Activated CD4-positive, alpha-beta T cell treated with anti-CD3 and anti-CD28 coated beads for 36 hours (primary cell): ENCODE measurements at regions of chr19 and their contacts with region 1.

Region 1: DNA sequence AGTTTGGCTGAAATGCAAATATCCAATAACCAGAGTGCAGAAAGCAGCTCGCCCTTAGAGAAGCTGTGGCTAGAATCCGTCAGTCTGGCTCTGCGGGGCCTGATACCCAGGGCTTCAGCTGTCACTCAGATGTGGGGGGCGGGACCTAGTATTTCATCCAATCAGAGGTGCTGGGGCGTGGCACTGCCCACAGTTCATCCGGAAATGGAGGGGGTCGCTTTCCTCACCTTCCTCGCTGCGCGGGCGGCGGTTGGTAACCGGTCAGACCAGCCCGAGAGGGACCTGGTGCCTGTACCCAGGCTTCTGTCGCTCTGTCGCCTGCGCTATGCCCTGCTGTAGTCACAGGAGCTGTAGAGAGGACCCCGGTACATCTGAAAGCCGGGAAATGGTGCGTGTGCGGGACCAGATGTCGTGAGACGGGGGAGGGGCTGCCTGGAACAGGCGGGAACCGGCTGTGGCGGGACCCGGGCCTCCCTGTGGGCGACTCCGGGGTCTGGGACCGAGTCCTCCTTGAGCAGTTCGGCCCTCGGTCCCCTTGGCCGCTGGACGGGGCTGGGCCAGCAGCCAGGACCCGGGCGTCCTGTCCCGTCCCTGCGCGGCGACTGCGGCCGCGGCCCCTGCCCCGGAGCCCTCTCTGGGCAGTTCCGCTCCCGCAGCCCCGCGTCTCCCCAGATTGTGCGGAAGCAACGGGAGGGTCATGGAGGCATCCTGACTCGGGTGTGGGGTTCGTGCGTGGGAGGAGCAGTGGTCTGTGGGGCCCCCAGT is at the start of gene ZNF700:
- DNase-seq: peak; percentile 97
- ATAC-seq: peak; percentile 92
- H3K4me3 Mint-ChIP-seq: peak within 1 kb of the TSS; percentile 81
- H3K27ac Mint-ChIP-seq: peak within 1 kb of the TSS; percentile 99
- H3K4me1 Mint-ChIP-seq: peaks cover 40% of the 10 kb centered on the region
- H3K27me3 Mint-ChIP-seq: no peaks in the 10 kb centered on the region
- total RNA-seq, gene ZNF700: 13.3 to 14.5 TPM

Region 2: GRCh38 chr19:11798391-11799330 is 126.4 kb before region 1 on chr19 and contains the start of gene ZNF491:
- CTCF ChIA-PET with region 1: interaction called, 16 read pairs
- POLR2A ChIA-PET with region 1: no interaction called
- intact Hi-C with region 1: loop called in 1 of 2 experiments (anchors 1 kb)
- DNase-seq: peak; percentile 95
- ATAC-seq: peak; percentile 99
- H3K4me3 Mint-ChIP-seq: peak within 1 kb of the TSS; percentile 73
- H3K27ac Mint-ChIP-seq: peak within 1 kb of the TSS; percentile 13
- H3K4me1 Mint-ChIP-seq: peaks cover 12% of the 10 kb centered on the region
- H3K27me3 Mint-ChIP-seq: no peaks in the 10 kb centered on the region
- total RNA-seq, gene ZNF491: 0.60 to 1.2 TPM

Region 3: GRCh38 chr19:11942843-11943108 is 17.7 kb after region 1 on chr19:
- CTCF ChIA-PET with region 1: interaction called, 11 read pairs
- POLR2A ChIA-PET with region 1: no interaction called
- intact Hi-C with region 1: no loop called
- DNase-seq: no peak
- ATAC-seq: no peak
- H3K4me3 Mint-ChIP-seq: no peak overlapping the region
- H3K27ac Mint-ChIP-seq: no peak overlapping the region
- H3K4me1 Mint-ChIP-seq: no peaks in the 10 kb centered on the region
- H3K27me3 Mint-ChIP-seq: no peaks in the 10 kb centered on the region

Region 4: GRCh38 chr19:12000152-12000981 is 75.3 kb after region 1 on chr19:
- CTCF ChIA-PET with region 1: interaction called, 4 read pairs
- POLR2A ChIA-PET with region 1: no interaction called
- intact Hi-C with region 1: loop called in 1 of 2 experiments (anchors 1 kb)
- DNase-seq: peak; percentile 57
- ATAC-seq: peak; percentile 96
- H3K4me3 Mint-ChIP-seq: no peak overlapping the region
- H3K27ac Mint-ChIP-seq: peak overlapping the region; percentile 81
- H3K4me1 Mint-ChIP-seq: peaks cover 23% of the 10 kb centered on the region
- H3K27me3 Mint-ChIP-seq: no peaks in the 10 kb centered on the region

Region 5: GRCh38 chr19:12064590-12065538 is 139.8 kb after region 1 on chr19 and contains the start of gene ZNF844:
- CTCF ChIA-PET with region 1: interaction called, 13 read pairs
- POLR2A ChIA-PET with region 1: interaction called, 5 read pairs
- intact Hi-C with region 1: loop called in 1 of 2 experiments (anchors 2 kb)
- DNase-seq: peak; percentile 91
- ATAC-seq: peak; percentile 94
- H3K4me3 Mint-ChIP-seq: peak within 1 kb of the TSS; percentile 79
- H3K27ac Mint-ChIP-seq: peak within 1 kb of the TSS; percentile 86
- H3K4me1 Mint-ChIP-seq: peaks cover 5% of the 10 kb centered on the region
- H3K27me3 Mint-ChIP-seq: no peaks in the 10 kb centered on the region
- total RNA-seq, gene ZNF844: 4.4 to 5.5 TPM

Region 6: GRCh38 chr19:12075538-12076139 is 150.6 kb after region 1 on chr19:
- CTCF ChIA-PET with region 1: no interaction called
- POLR2A ChIA-PET with region 1: no interaction called
- intact Hi-C with region 1: no loop called
- DNase-seq: no peak
- ATAC-seq: no peak
- H3K4me3 Mint-ChIP-seq: no peak overlapping the region
- H3K27ac Mint-ChIP-seq: no peak overlapping the region
- H3K4me1 Mint-ChIP-seq: no peaks in the 10 kb centered on the region
- H3K27me3 Mint-ChIP-seq: no peaks in the 10 kb centered on the region

Region 7: GRCh38 chr19:12162882-12163806 is 238.1 kb after region 1 on chr19 and contains the start of gene ZNF136:
- CTCF ChIA-PET with region 1: no interaction called
- POLR2A ChIA-PET with region 1: no interaction called
- intact Hi-C with region 1: loop called in 1 of 2 experiments (anchors 1 kb)
- DNase-seq: peak; percentile 97
- ATAC-seq: peak; percentile 100
- H3K4me3 Mint-ChIP-seq: peak within 1 kb of the TSS; percentile 98
- H3K27ac Mint-ChIP-seq: peak within 1 kb of the TSS; percentile 99
- H3K4me1 Mint-ChIP-seq: peaks cover 38% of the 10 kb centered on the region
- H3K27me3 Mint-ChIP-seq: no peaks in the 10 kb centered on the region
- total RNA-seq, gene ZNF136: 11.7 to 12.9 TPM